Left cardiac atrium (tissue), 4 donors: ENCODE measurements at regions of chr6 and their contacts with region 1.

Region 1: DNA sequence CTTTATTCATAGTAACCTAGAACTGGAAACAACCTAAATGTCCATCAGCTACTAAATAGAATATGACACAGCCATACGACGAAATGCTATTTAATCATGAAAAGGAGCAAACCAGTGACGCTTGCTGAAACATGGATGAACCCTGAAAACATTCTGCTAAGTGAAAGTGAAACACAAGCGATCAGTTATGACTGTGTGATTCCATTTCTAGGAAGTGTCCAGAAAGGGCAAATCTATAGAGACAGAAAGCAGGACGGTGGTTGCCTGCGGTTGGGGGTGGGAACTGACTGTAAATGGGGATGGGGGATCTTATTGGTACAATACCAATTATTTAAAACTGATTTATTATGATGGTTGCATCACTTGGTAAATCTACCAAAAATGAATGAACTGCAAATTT is 126.8 kb downstream of the IPCEF1 start:
- DNase-seq: no peak
- ATAC-seq: no peak

Region 2: DNA sequence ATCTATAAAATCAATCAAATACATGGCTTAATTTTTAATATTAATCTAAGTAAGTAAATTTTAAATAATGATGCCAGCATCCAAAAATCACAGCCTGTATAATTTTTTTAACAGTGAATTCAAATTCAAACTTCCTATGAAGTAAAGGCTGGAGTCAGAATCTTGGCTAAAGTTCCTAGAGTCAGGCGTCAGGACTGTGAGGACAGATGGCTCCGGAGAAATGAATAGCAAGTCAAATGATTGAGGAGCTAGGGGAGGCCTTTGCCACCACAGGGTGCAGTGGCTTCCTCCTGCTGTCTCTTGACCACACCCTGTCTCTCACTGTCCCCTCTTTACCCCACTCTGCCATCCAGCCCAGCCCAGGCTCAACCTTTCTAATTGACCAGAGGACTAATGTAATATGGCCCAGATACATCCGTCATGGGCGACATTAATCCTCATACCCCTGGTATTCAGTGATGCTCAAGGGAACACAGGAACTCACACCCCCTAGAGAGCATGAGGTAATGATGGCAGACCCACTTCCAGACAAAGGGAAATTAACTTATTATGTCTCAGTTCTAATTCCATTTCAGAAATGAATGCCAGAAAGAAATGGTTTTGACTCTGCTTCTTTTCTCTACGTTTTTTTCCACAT is 137.3 kb before region 1 on chr6:
- intact Hi-C with region 1: no loop called
- DNase-seq: no peak
- ATAC-seq: no peak

Region 3: DNA sequence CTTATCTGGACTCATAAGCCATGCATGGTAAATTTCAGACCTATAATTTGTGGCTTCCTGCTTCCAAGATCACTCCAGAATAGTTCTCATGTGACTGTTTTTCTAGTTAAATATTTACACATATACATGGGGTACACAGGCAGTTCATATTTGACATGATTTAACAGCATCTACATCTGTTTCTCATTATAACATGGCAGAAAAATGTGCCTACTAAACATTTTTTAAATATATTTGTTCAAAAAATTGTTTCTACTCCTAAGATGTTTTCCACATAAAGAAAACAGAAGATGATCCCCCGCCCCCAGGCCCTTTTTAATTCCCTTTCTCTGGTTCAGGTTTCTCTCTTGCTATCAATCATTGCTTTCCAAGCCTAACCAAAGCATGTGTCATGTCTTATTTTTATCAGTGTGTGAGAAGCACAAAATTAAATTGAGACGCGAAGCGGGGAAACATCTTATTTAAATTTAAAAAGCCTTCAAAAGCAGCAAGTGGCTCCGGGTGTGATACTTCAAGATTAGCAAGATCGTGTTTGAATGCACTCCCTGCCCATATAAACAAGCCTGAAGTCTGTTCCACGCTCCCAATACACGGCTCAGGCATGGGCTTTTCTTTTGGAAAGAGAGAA is 89.6 kb after region 1 on chr6:
- intact Hi-C with region 1: loop called in 1 of 2 experiments (anchors 5 kb)
- DNase-seq: no peak
- ATAC-seq: no peak

Region 4: DNA sequence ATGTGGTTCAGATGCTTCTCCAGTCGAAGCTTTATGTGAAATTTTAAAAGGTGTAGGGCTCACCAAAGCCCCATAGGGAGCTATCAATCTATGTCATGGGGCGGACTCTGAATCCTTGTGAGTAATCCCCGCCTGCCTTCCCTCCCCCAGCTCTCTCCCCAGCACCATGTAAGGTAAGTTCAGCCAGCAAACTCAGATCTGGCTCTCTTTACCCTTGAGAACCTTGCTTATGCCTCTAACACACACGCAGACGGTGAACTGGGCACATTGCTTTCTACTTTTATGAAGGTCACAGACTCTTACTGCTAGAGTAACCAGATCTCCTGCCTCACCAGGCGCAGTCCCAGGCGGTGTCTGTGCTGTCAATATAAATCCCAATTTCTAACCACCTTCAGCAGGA is 363.3 kb after region 1 on chr6:
- intact Hi-C with region 1: no loop called
- DNase-seq: peak; percentile 40
- ATAC-seq: peak; percentile 85 to 90